Ascending aorta (tissue), 2 donors: ENCODE measurements at regions of chr7 and their contacts with region 1.

Region 1: DNA sequence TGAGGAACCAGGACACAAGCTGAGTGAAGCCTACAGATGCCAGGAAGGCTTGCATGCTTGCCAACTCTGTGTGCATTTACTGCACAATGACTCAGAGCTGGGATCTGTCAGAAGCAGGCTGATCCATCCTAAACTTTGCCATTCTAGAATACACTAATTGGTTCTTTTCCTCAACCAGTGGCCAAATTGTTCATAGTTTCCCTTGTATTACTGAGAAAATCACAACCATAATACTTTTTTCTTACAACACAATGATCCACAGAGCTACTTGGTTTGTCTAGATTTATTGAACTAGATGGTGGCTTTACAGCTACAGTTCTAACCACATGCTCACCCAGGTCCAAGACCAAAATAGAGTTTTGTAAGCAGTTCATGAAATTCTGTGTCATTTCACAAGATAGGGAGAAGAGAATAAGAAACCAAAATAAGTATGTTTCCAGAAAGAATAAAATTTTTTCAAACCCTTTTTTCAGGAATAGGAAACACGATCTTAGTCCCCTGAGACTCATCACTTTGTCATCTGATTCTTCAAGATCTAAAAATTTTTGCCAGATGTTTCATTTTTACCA is 21.0 kb upstream of the LRRC17 start:
- DNase-seq: peak; percentile 16 to 85
- H3K4me3 ChIP-seq: no peak overlapping the region
- H3K27ac ChIP-seq: peak overlapping the region; percentile 14 to 39
- H3K4me1 ChIP-seq: peaks cover 9 to 55% of the 10 kb centered on the region in 2 donors
- H3K27me3 ChIP-seq: no peaks in the 10 kb centered on the region
- CTCF ChIP-seq: no peak

Region 2: DNA sequence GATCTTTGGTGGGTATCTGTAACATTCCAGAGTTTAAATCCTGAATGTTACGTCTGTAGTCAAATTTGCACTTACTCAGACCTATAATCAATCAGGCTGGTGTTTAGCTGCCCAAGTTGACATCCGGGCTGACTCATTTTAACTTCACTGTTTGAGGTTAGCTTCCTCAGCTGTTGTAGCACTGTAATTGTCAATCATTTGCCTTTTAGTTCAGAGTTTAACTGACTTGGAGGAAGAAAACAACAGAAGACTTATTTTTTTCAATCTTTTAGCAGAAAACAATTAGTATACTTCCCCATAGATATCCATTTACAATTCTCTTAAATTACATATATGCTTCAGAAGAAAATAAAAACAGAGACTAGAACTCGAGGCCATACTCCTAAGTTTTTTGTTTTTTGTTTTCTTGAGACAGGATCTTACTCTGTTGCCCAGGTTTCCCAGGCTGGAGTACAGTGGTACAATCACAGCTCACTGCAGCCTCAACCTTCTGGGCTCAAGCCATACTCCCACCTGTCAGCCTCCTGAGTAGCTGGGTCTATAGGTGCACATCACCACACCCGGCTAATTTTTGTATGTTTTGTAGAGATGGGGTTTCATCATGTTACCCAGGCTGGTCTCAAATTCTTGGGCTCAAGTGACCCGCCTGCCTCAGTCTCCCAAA is 17.5 kb before region 1 on chr7:
- intact Hi-C with region 1: loop called (anchors 1 kb)
- DNase-seq: no peak
- H3K4me3 ChIP-seq: no peak overlapping the region
- H3K27ac ChIP-seq: peak overlapping the region; percentile 59 to 74
- H3K4me1 ChIP-seq: peaks cover 5 to 26% of the 10 kb centered on the region in 2 donors
- H3K27me3 ChIP-seq: no peaks in the 10 kb centered on the region
- CTCF ChIP-seq: no peak

Region 3: DNA sequence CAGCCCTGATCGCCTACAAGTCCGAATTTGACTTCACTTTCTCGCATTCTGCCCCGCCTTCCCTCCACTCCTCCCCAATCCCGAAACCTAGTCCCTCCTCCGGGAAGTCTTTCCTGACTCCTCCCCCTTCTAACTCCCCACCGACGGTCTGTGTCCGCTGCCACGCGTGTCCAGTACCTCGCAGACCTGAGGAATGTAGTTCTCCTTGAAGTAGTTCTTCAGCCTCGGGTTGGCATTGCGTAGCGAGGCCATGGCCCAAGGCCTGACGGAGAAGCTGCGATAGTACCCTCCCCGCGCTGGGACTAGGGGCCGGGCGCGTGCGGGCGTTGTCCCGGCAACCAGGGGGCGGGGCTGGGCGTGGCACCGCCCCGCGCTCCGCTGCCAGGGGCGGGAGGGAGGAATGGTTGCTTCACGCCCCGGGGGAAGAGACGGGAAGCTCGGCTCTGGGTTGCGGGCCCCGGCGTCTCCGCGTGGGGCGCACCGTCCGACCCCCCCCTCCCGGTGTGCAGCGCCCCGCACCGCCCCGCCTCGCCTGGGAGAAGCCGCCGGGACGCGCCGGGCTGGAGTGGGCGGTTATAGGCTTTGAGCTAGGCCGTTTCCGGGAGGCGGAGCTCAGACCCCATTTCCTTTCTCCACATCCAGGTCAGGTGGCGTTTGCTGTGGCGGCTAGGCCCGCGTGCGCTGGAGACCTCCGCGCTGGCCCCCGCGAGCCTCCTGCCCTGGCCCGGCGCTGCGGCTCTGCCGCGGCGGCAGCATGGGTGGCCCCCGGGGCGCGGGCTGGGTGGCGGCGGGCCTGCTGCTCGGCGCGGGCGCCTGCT is 183.0 kb after region 1 on chr7 and contains the starts of genes ARMC10 and FBXL13:
- intact Hi-C with region 1: loop called (anchors 5 kb)
- DNase-seq: peak; percentile 55 to 95
- H3K4me3 ChIP-seq: peak within 1 kb of the TSS; percentile 81 to 92
- H3K27ac ChIP-seq: peak within 1 kb of the TSS; percentile 93 to 97
- H3K4me1 ChIP-seq: peaks cover 0 to 13% of the 10 kb centered on the region in 2 donors
- H3K27me3 ChIP-seq: no peaks in the 10 kb centered on the region
- CTCF ChIP-seq: peak; percentile 19 to 48 (median 41)
- total RNA-seq, gene ARMC10: 66.4 TPM
- total RNA-seq, gene FBXL13: 0.75 TPM